ENCODE measurements at regions of chr19 and their contacts with region 1.

Region 1: DNA sequence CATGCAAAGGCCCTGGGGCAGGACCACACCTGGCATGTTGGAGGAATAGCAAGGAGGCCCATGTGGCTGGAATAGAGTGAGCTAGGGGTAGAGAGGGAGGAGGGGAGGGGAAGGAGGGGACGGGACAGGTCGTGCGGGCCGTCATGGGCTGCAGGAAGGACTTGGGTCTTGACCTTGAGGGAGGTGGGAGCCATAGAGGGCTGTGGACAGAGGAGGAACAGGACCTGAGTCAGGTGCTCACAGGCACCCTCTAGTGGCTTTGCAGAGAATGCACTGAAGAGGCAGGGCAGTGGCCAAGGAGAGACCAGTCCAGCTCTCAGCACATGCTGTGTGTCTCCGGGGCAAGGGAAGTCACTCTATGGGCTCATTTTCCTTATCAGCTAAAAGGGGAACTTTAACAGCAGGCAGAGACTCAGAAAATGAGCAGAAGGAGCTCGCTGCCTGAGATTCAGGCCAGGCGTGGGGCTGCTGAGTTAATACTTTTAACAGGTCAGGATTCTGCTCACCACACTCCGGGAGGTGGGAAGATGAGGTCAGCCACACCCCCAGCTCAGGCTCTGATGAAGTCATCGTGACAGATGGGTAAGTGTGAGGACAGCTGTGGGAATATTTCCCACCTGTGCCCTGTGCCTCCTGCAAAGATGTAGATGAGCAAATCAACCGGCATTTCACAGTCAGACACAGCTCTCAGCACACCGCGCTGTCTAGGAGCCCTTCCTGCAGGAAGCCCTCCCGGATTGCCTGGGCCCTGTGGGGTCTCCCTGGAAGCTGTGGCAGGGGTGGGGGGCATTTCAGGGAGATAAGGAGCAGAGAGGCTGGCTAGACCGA is 6.0 kb upstream of the TNFAIP8L1 start:
- DNase-seq: peak; percentile 18 to 63 (median 32)
- H3K4me3 ChIP-seq: no peak overlapping the region
- H3K4me3 Mint-ChIP-seq: peak overlapping the region in 1 of 7 donors; percentile 51
- H3K27ac ChIP-seq: peak overlapping the region; percentile 2
- H3K27ac Mint-ChIP-seq: peak overlapping the region in 6 of 8 donors; percentile 14 to 83 (median 60)
- H3K4me1 ChIP-seq: peaks cover 23% of the 10 kb centered on the region
- H3K4me1 Mint-ChIP-seq: peaks cover 4 to 15% (median 9%) of the 10 kb centered on the region in 3 donors
- H3K27me3 ChIP-seq: no peaks in the 10 kb centered on the region
- H3K27me3 Mint-ChIP-seq: peaks cover 4 to 9% of the 10 kb centered on the region in 2 donors

Region 2: DNA sequence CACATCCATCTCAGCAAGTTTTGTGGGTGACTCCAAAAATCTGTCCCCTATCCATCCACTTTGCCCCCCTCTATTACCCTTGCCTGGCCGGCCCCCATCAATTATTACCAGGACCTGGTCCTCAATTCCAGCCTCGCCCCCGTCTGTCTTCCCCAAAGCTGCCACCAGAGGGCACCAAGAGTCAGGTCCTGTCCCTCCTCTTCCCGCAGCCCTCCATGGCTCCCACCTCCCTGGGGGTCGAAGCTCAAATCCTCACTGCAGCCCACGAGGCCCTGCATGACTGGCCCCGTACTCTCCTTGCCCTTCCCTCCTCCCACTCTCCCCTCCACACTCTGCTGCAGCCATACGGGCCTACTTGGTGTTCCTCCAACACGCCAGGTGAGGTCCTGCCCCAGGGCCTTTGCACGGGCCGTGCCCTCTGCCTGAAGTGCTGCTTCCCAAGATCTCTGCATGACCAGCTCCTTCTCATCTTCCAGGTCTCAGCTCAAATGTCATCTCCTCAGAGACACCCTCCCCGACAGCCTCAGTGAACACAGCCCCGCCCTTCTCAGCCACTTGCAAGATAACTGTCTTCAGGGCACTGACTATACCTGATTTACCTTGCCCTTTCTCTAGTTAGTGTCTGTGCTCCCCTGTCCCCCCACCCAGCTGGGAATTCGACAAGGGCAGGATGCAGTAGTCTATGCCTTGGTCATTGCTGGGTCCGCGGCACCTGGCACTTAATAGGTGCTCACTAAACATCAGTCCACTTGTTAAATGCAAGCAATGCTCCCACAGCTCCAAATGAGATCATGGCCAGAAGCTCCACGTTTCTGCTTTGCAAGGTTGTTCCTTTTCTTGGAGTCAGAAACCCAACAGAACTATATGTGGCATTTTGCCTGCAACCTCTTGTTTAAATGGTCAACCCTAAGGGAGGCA is 57.1 kb before region 1 on chr19:
- CTCF ChIA-PET with region 1: interaction called, 44 read pairs
- POLR2A ChIA-PET with region 1: interaction called, 7 read pairs
- DNase-seq: peak; percentile 40 to 79 (median 55)
- H3K4me3 ChIP-seq: no peak overlapping the region
- H3K4me3 Mint-ChIP-seq: no peak overlapping the region
- H3K27ac ChIP-seq: no peak overlapping the region
- H3K27ac Mint-ChIP-seq: no peak overlapping the region
- H3K4me1 ChIP-seq: no peaks in the 10 kb centered on the region
- H3K4me1 Mint-ChIP-seq: no peaks in the 10 kb centered on the region
- H3K27me3 ChIP-seq: peaks cover 15% of the 10 kb centered on the region
- H3K27me3 Mint-ChIP-seq: peaks cover 28 to 45% of the 10 kb centered on the region in 2 donors